ENCODE measurements at regions of chr1 and their contacts with region 1.

Region 1: DNA sequence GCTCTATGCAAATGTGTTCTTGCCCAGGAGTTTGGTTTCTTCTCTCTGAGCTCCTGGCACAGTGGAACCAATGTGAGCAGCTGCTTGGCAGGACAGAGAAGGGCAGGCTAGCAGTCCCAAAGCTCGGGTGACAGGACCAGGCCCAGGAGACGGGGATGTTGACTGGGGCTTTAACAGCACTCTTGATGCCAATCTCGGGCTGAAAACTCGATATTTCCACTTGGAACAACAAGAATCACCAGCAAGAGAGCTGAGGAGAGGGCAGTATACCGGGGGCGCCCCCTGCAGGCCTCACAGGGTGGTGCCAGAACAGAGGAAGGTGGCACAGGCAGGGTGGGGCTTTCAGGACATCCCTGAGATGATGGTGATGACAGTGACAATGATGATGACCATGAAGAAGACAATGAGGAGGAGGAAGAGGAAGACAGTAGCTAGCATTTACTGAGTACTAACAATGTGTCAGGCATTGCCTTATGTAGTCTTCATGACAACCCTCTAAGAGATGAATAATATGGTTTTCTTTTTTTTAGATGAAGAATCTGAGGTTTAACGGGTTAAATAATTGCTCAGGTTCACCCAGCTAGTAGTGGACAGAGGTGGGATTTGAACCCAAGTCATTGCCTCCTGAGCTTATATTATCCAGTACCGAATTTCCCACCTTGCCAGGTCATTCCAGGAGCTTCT is 2.7 kb upstream of the KCNJ9 start:
- DNase-seq: peak; percentile 65
- H3K4me3 Mint-ChIP-seq: no peak overlapping the region
- H3K27ac Mint-ChIP-seq: no peak overlapping the region
- H3K4me1 Mint-ChIP-seq: peaks cover 2% of the 10 kb centered on the region
- H3K27me3 Mint-ChIP-seq: peaks cover 59% of the 10 kb centered on the region

Region 2: DNA sequence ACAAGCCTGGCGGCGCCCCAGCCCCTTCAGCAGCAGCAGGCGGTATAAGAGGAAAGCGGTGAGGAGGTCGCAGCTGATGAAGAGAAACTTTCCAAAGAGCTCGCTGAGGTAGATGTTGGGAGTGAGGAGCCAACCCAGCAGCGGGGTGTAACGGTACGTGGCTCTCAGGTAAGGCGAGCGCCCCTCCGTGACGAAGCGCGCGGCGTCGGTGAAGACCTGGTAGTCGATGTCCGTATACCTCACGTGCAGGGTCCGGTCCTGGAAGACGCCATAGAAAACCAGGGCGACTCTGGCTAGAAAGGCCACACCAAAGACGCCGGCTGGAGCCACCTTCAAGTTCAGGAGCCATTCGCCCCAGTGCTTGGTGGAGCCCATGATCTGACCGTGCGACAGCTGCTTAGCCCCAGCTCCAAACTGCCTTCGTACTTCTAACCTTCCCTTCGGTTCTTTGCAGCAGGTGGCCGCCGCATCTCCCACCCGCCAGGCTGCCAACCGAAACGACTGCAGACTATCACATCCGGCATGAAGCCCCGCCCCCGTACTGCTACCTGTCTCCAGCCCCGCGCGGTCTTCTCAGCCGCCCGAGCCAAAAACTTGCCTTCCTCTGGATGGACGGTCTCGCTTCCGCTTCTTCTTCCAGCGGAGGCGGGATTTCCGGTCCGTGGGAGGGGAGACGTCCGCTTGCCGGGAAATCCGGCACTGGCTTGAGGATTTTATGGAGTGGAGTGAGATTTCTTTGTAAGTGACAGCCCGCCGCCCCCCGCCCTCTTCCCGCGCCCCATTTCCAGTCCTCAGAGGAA is 47.1 kb before region 1 on chr1 and contains the start of gene PIGM:
- CTCF ChIA-PET with region 1: interaction called, 20 read pairs
- POLR2A ChIA-PET with region 1: no interaction called
- DNase-seq: peak; percentile 97
- H3K4me3 Mint-ChIP-seq: peak within 1 kb of the TSS; percentile 96
- H3K27ac Mint-ChIP-seq: peak within 1 kb of the TSS; percentile 91
- H3K4me1 Mint-ChIP-seq: peaks cover 28% of the 10 kb centered on the region
- H3K27me3 Mint-ChIP-seq: peaks cover 3% of the 10 kb centered on the region
- total RNA-seq, gene PIGM: 5.9 to 6.4 TPM

Region 3: DNA sequence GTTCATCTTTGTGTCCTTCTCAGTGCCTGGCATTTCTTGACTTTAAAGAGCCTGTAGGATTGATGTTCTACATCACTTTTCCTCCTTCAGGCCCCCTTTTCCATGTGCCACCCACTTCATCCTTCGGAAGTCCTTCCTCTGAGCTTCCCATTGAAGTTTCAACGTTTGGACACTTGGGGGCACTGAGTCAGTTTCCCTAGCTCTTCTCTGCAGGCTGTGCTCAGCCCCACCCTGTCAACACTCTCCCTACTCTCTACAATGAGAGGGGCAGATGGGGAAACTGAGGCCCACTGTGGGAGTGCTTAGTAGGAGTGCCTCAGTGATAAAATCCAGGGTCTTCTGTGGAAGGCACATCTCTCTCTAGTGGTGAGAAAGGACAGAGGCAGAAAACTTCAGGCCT is 20.6 kb before region 1 on chr1:
- CTCF ChIA-PET with region 1: interaction called, 20 read pairs
- POLR2A ChIA-PET with region 1: no interaction called
- DNase-seq: no peak
- H3K4me3 Mint-ChIP-seq: no peak overlapping the region
- H3K27ac Mint-ChIP-seq: no peak overlapping the region
- H3K4me1 Mint-ChIP-seq: no peaks in the 10 kb centered on the region
- H3K27me3 Mint-ChIP-seq: peaks cover 29% of the 10 kb centered on the region

Region 4: GRCh38 chr1:160098852-160099561 is 20.4 kb after region 1 on chr1:
- CTCF ChIA-PET with region 1: interaction called, 17 read pairs
- POLR2A ChIA-PET with region 1: no interaction called
- DNase-seq: peak; percentile 98
- H3K4me3 Mint-ChIP-seq: peak overlapping the region; percentile 77
- H3K27ac Mint-ChIP-seq: peak overlapping the region; percentile 94
- H3K4me1 Mint-ChIP-seq: peaks cover 49% of the 10 kb centered on the region
- H3K27me3 Mint-ChIP-seq: no peaks in the 10 kb centered on the region

Region 5: DNA sequence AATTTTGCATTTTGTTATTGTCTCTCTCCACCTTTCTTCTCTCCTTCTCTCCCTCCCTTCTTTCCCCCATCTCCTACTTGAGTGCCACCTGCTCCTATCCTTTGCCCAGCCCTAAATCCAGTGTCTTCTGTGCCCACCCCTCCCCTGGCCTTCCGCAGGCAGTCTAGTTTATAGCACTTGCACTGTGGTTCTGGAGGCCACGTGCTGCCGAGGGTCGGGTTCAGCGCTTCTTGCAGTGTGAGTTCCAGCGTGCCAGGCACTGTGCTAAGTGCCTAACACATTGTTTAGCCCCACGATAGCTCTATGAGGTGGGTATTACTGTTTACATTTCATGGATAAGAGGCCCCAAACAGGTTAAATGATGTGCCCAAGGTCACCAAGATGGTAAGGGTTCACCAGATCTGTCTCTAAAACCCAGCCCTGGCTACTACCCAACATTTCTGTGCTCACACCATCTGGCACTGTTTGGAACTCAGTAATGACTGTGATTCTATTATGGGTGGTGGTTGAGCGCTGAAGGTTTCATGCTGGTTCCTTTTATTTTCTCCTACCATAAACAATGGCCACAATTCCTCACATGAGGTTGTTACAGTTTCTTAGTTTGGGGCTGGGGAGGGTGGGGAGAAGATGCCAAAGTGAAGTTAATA is 58.7 kb after region 1 on chr1:
- CTCF ChIA-PET with region 1: no interaction called
- POLR2A ChIA-PET with region 1: no interaction called
- DNase-seq: no peak
- H3K4me3 Mint-ChIP-seq: no peak overlapping the region
- H3K27ac Mint-ChIP-seq: no peak overlapping the region
- H3K4me1 Mint-ChIP-seq: no peaks in the 10 kb centered on the region
- H3K27me3 Mint-ChIP-seq: peaks cover 14% of the 10 kb centered on the region

Measured in activated CD4-positive, alpha-beta T cell treated with anti-CD3 and anti-CD28 coated beads, Interleukin-2, amount 10 ng/mL, durations not matched to agents 7 days and 5 days (primary cell).